ENCODE measurements at regions of chr10 and their contacts with region 1.

Region 1: DNA sequence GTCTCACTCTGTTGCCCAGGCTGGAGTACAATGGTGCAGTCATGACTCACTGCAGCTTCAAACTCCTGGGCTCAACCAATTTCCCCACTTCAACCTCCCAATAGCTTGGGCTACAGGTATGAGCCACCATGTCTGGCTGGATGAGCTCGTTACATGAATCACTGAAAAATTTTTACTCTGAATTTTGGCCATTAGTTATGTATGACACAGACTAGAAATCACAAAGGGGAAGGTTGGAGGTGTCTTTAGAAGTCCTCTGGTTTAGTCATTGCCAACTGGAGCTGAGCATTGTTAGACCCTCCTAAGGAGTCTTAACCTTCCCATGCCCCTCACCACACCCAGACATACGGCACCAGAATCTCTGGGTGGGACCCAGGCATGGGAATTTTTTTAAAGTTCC is 34.7 kb downstream of the SVIL start:
- DNase-seq: peak in 1 of 2 donors; percentile 37
- H3K4me3 ChIP-seq: no peak overlapping the region
- H3K27ac ChIP-seq: peak overlapping the region; percentile 79 to 87
- H3K4me1 ChIP-seq: peaks cover 4 to 62% of the 10 kb centered on the region in 2 donors
- H3K27me3 ChIP-seq: no peaks in the 10 kb centered on the region
- CTCF ChIP-seq: no peak

Region 2: DNA sequence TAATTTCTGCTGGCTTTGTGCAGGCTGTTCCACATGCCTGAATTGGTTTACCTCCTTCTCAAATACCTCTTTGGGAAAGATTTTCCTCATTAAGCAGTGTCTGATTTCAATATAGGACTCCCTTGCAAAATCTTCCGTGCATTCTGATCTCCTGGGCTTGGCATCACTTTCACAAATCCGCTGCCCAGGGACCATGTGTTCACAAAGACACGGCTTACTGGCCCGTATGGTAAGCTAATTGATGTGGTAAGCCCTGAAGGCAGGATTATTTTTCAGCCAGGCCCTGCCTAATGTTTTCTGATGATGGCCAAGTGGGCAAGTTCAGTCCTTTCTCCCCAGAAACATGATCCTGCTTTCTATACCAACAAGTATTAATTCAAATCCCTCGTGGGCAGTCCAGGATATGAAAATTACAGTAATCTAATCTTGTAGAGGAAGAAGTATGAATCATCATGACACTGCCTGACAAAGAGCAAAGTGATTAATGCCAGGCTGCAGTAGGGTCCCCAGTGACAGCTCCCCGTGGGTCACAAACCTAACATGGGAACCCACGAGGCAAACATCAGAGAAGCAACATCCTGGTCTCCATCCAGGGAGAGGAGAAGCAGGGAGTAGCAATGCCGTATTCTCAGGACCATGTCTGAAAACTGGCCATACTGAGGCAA is 46.3 kb after region 1 on chr10:
- intact Hi-C with region 1: loop called (anchors 5 kb)
- DNase-seq: no peak
- H3K4me3 ChIP-seq: peak overlapping the region in 1 of 2 donors; percentile 33
- H3K27ac ChIP-seq: peak overlapping the region; percentile 73 to 76
- H3K4me1 ChIP-seq: peaks cover 21 to 60% of the 10 kb centered on the region in 2 donors
- H3K27me3 ChIP-seq: no peaks in the 10 kb centered on the region
- CTCF ChIP-seq: no peak